Activated CD4-positive, alpha-beta T cell treated with anti-CD3 and anti-CD28 coated beads, Interleukin-2, amount 10 ng/mL, durations not matched to agents 7 days and 5 days (primary cell): ENCODE measurements at regions of chr15 and their contacts with region 1.

Region 1: GRCh38 chr15:74635228-74635627 is 19.6 kb downstream of the CLK3 start:
- DNase-seq: peak; percentile 82
- H3K4me3 Mint-ChIP-seq: no peak overlapping the region
- H3K27ac Mint-ChIP-seq: no peak overlapping the region
- H3K4me1 Mint-ChIP-seq: peaks cover 3% of the 10 kb centered on the region
- H3K27me3 Mint-ChIP-seq: no peaks in the 10 kb centered on the region

Region 2: DNA sequence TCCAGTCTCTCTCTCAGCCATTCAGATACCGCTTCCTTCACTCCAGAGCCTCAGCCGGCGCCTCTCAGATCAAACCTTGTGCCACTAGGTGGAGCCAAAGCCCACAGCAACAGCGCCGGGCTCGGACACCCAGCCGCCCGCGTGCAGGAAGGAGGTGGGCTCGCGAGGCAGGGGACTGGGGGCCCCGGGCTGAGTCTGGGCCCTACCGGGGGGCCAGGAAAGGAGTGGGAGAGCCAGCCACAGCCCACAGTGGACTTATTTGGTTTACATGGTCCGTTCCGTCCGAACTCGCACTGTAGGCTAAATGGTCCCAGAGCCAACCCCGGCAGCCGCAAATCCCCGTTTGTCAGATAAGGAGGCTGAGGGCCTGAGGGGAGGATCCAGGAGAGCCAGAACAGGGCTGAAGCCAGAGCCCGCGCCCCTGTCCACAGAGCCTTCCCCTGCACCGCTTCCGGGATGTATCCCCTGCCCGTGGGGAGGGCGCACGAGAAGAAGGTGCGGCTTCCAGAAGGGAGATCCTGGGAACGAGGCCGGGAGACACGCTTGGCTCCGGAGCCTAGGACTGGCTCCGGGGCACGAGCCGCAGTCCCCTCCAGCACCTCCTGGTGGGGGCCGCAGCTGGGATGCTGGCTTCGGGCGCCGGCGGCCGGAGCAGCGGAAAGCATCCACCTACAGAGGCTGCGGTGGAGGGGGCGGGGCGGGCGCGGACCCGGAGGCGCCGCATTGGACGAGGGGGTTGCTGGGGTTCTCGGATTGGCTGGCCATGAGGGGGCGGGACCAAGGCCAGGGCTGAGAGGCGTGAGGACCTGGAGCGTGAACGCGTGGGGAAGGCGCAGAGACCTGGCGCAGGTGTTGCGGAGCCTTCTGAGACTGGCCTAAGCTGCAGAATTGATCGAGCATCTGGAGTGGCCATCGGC is 261.2 kb before region 1 on chr15:
- CTCF ChIA-PET with region 1: interaction called, 16 read pairs
- POLR2A ChIA-PET with region 1: no interaction called
- DNase-seq: peak; percentile 96
- H3K4me3 Mint-ChIP-seq: peak overlapping the region; percentile 79
- H3K27ac Mint-ChIP-seq: peak overlapping the region; percentile 65
- H3K4me1 Mint-ChIP-seq: peaks cover 25% of the 10 kb centered on the region
- H3K27me3 Mint-ChIP-seq: peaks cover 26% of the 10 kb centered on the region

Region 3: GRCh38 chr15:74648166-74648842 is 13.1 kb after region 1 on chr15:
- CTCF ChIA-PET with region 1: interaction called, 15 read pairs
- POLR2A ChIA-PET with region 1: no interaction called
- DNase-seq: no peak
- H3K4me3 Mint-ChIP-seq: no peak overlapping the region
- H3K27ac Mint-ChIP-seq: no peak overlapping the region
- H3K4me1 Mint-ChIP-seq: peaks cover 3% of the 10 kb centered on the region
- H3K27me3 Mint-ChIP-seq: no peaks in the 10 kb centered on the region

Region 4: GRCh38 chr15:74768771-74769342 is 133.6 kb after region 1 on chr15:
- CTCF ChIA-PET with region 1: interaction called, 141 read pairs
- POLR2A ChIA-PET with region 1: no interaction called
- DNase-seq: peak; percentile 77
- H3K4me3 Mint-ChIP-seq: no peak overlapping the region
- H3K27ac Mint-ChIP-seq: peak overlapping the region; percentile 58
- H3K4me1 Mint-ChIP-seq: peaks cover 25% of the 10 kb centered on the region
- H3K27me3 Mint-ChIP-seq: peaks cover 6% of the 10 kb centered on the region

Region 5: GRCh38 chr15:74799856-74800547 is 164.8 kb after region 1 on chr15:
- CTCF ChIA-PET with region 1: interaction called, 11 read pairs
- POLR2A ChIA-PET with region 1: no interaction called
- DNase-seq: peak; percentile 86
- H3K4me3 Mint-ChIP-seq: no peak overlapping the region
- H3K27ac Mint-ChIP-seq: peak overlapping the region; percentile 80
- H3K4me1 Mint-ChIP-seq: peaks cover 55% of the 10 kb centered on the region
- H3K27me3 Mint-ChIP-seq: no peaks in the 10 kb centered on the region